SK-N-SH (cell line): ENCODE measurements at regions of chr7 and their contacts with region 1.

Region 1: DNA sequence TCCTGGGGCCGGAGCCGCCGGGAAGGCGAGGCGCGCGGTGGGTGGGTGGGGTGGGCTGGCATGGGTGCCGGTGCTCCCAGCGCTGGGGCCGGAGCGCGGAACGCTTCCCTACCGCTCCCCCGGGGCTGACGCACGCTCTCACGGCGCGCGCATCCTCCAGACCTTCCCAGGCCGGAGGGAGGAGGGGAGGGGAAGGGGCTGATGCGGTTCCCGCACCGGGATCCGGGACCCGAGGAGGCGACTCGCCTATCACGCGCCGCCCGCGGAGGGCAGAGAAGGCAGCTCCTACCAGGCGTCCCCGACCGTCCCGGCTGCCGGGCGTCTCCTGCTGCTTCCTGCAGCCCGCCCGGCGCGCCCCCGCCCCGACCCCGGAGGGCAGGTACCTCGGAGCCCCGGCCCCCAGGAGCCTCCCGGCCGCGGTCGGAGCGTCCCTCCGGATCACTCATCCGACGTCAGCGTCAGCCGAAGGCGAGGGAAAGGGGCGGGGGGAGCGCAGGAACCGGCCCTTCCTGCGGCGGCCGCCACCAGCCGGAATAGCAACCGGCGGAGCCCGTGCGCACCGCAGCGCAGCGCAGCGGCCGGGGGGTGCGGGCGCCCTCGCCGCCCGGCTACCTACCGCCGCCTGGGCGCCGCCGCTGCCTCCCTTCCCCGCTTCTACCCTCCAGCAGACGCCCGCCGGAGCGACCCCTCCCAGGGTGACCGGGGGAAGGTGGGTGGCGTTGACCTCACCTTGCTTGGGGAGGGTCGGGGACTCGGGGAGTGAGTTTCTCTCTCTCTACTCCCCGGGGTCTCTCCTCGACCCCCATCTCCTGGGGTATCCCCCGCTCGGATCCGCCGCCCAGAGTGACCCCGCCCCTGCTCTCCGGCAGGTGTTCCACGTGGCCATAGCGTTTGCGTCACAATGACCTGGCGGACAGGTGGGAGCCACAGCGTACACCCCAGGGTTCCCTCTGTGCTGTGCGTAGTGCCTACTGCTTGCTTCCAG is at the start of gene ICA1:
- DNase-seq: peak; percentile 90
- H3K4me3 ChIP-seq: peak within 1 kb of the TSS; percentile 63 to 71
- H3K27ac ChIP-seq: peak within 1 kb of the TSS in 1 of 2 experiments; percentile 100; a peak in 3 of 4 replicates
- H3K4me1 ChIP-seq: peaks cover 0 to 21% of the 10 kb centered on the region in 2 experiments; a peak in 2 of 4 replicates
- H3K27me3 ChIP-seq: peaks cover 14% of the 10 kb centered on the region; the same call in 1 of the 2 replicates
- CTCF ChIP-seq: no peak
- EP300 ChIP-seq: no peak
- RAD21 ChIP-seq: no peak
- polyA plus RNA-seq, gene ICA1: 2.4 and 5.4 TPM in 2 replicates

Region 2: GRCh38 chr7:7968543-7969305 is 293.3 kb before region 1 on chr7 and contains the start of gene GLCCI1:
- CTCF ChIA-PET with region 1: interaction called, 3 read pairs
- POLR2A ChIA-PET with region 1: interaction called, 17 read pairs
- DNase-seq: peak; percentile 96
- H3K4me3 ChIP-seq: peak within 1 kb of the TSS; percentile 87 to 100
- H3K27ac ChIP-seq: peak within 1 kb of the TSS; percentile 77 to 99
- H3K4me1 ChIP-seq: peaks cover 8 to 37% of the 10 kb centered on the region in 2 experiments; a peak in 3 of 4 replicates
- H3K27me3 ChIP-seq: no peaks in the 10 kb centered on the region
- CTCF ChIP-seq: no peak
- EP300 ChIP-seq: peak; percentile 34 to 39; a peak in 2 of 4 replicates
- RAD21 ChIP-seq: peak; percentile 13; the same call in 1 of the 2 replicates
- polyA plus RNA-seq, gene GLCCI1: 5.5 and 7.5 TPM in 2 replicates

Region 3: GRCh38 chr7:8226501-8226900 is 35.5 kb before region 1 on chr7:
- CTCF ChIA-PET with region 1: interaction called, 26 read pairs
- POLR2A ChIA-PET with region 1: interaction called, 229 read pairs
- DNase-seq: no peak
- H3K4me3 ChIP-seq: no peak overlapping the region
- H3K27ac ChIP-seq: peak overlapping the region in 1 of 2 experiments; percentile 100; a peak in 2 of 4 replicates
- H3K4me1 ChIP-seq: peaks cover 0 to 68% of the 10 kb centered on the region in 2 experiments; a peak in 2 of 4 replicates
- H3K27me3 ChIP-seq: no peaks in the 10 kb centered on the region
- CTCF ChIP-seq: no peak
- EP300 ChIP-seq: peak in 1 of 2 experiments; percentile 56; a peak in 2 of 4 replicates
- RAD21 ChIP-seq: no peak

Region 4: DNA sequence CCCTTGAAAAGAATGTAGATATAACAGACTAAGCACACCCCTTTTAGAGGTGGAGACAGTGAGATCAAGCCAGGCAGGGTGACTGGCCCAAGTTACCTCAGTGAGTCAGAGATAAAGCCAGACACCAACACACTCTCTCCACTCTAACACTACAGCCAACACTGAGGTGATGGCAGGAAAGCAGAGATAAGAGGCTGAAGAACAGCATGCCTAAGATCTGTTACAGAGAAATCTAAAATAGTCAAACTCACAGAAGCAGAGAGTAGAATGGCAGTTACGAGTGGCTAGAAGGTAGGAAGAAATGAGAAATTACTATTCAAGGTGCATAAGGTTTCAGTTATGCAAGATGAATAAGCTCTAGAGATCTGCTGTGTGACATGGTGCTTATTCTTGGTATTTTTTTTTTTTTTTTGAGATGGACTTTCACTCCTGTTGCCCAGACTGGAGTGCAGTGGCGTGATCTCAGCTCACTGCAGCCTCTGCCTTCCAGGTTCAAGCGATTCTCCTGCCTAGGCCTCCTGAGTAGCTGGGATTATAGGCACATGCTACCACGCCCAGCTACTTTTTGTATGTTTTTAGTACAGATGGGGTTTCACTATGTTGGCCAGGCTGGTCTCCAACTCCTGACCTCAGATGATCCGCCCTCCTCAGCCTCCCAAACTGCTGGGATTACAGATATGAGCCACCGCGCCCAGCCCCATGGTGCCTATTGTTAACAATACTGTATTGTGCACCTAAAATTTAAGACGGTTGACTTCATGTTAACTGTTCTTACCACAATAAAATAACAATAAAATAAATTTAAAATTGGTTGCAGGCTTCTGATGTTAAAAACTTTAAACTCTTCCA is 28.8 kb before region 1 on chr7:
- CTCF ChIA-PET with region 1: interaction called, 26 read pairs
- POLR2A ChIA-PET with region 1: interaction called, 229 read pairs
- DNase-seq: no peak
- H3K4me3 ChIP-seq: no peak overlapping the region
- H3K27ac ChIP-seq: peak overlapping the region in 1 of 2 experiments; percentile 100; a peak in 2 of 4 replicates
- H3K4me1 ChIP-seq: peaks cover 0 to 60% of the 10 kb centered on the region in 2 experiments; a peak in 2 of 4 replicates
- H3K27me3 ChIP-seq: no peaks in the 10 kb centered on the region
- CTCF ChIP-seq: no peak
- EP300 ChIP-seq: peak in 1 of 2 experiments; percentile 52; a peak in 1 of 4 replicates
- RAD21 ChIP-seq: no peak

Region 5: GRCh38 chr7:8290645-8291314 is 28.8 kb after region 1 on chr7:
- CTCF ChIA-PET with region 1: interaction called, 26 read pairs
- POLR2A ChIA-PET with region 1: interaction called, 122 read pairs
- DNase-seq: peak; percentile 77
- H3K4me3 ChIP-seq: no peak overlapping the region
- H3K27ac ChIP-seq: peak overlapping the region in 1 of 2 experiments; percentile 100; a peak in 3 of 4 replicates
- H3K4me1 ChIP-seq: peaks cover 0 to 61% of the 10 kb centered on the region in 2 experiments; a peak in 2 of 4 replicates
- H3K27me3 ChIP-seq: no peaks in the 10 kb centered on the region
- CTCF ChIP-seq: no peak
- EP300 ChIP-seq: peak; percentile 46 to 100; a peak in 3 of 4 replicates
- RAD21 ChIP-seq: peak; percentile 45

Region 6: GRCh38 chr7:8357536-8357935 is 95.5 kb after region 1 on chr7:
- CTCF ChIA-PET with region 1: no interaction called
- POLR2A ChIA-PET with region 1: interaction called, 12 read pairs
- DNase-seq: peak; percentile 68
- H3K4me3 ChIP-seq: peak overlapping the region; percentile 3 to 25; a peak in 1 of 4 replicates
- H3K27ac ChIP-seq: peak overlapping the region in 1 of 2 experiments; percentile 96; a peak in 2 of 4 replicates
- H3K4me1 ChIP-seq: peaks cover 0 to 14% of the 10 kb centered on the region in 2 experiments; a peak in 2 of 4 replicates
- H3K27me3 ChIP-seq: no peaks in the 10 kb centered on the region
- CTCF ChIP-seq: no peak
- EP300 ChIP-seq: peak; percentile 13 to 98; a peak in 2 of 4 replicates
- RAD21 ChIP-seq: peak; percentile 31; the same call in 1 of the 2 replicates